ENCODE measurements at regions of chr4 and their contacts with region 1.

Region 1: DNA sequence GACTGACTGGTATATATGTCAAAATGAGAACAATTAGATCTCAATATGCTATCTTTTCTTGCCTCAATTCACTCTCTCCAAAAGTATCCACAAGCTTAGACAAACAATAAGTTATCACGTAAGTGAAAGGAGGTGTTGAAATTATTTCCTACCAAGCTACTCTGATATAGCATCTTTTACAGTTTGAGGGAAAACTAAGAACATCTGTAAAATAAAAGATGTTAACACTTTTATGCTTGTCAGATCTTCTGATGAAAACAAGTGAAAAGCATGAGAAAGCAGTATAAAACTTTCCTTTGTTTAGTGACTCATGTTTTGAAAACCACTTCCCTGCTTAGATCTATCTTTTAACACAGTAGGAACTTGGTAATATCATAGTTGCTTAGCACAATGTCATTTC is 8.4 kb upstream of the MAB21L2 start:
- DNase-seq: no peak
- H3K4me3 Mint-ChIP-seq: no peak overlapping the region
- H3K27ac Mint-ChIP-seq: no peak overlapping the region
- H3K4me1 Mint-ChIP-seq: peaks cover 6% of the 10 kb centered on the region
- H3K27me3 Mint-ChIP-seq: no peaks in the 10 kb centered on the region

Region 2: DNA sequence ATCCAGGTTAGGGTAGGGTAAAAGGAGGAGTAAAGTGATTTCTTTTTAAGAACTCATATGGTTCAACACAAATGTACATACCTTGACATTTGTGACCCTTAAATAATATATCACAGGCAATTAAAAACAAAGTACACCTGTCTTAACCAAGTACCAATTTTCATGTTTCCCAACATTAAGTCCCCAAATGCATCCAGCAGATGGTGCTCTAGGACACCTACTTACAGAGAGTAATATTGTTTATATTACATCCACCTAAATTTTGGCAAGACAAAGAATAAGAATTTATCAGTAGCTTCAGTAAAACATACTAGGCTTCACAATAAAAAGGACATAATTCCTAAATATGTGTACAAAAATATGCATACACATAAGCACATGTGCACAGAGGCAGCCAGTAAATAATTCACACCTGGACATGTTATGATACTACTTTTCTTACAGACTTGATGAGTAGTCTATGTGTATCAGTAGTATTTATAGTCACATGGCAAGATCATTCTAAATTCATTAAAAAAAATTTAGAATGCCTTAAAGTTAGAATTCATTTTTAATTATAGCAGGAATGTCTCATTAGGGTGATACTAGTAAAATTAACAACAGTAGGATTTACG is 275.6 kb before region 1 on chr4:
- CTCF ChIA-PET with region 1: interaction called, 3 read pairs
- POLR2A ChIA-PET with region 1: no interaction called
- intact Hi-C with region 1: loop called (anchors 5 kb)
- DNase-seq: peak; percentile 34
- H3K4me3 Mint-ChIP-seq: no peak overlapping the region
- H3K27ac Mint-ChIP-seq: no peak overlapping the region
- H3K4me1 Mint-ChIP-seq: peaks cover 7% of the 10 kb centered on the region
- H3K27me3 Mint-ChIP-seq: no peaks in the 10 kb centered on the region

Region 3: GRCh38 chr4:150518559-150518958 is 55.0 kb before region 1 on chr4:
- CTCF ChIA-PET with region 1: no interaction called
- POLR2A ChIA-PET with region 1: no interaction called
- intact Hi-C with region 1: loop called (anchors 5 kb)
- DNase-seq: no peak
- H3K4me3 Mint-ChIP-seq: no peak overlapping the region
- H3K27ac Mint-ChIP-seq: no peak overlapping the region
- H3K4me1 Mint-ChIP-seq: peaks cover 17% of the 10 kb centered on the region
- H3K27me3 Mint-ChIP-seq: no peaks in the 10 kb centered on the region

Region 4: DNA sequence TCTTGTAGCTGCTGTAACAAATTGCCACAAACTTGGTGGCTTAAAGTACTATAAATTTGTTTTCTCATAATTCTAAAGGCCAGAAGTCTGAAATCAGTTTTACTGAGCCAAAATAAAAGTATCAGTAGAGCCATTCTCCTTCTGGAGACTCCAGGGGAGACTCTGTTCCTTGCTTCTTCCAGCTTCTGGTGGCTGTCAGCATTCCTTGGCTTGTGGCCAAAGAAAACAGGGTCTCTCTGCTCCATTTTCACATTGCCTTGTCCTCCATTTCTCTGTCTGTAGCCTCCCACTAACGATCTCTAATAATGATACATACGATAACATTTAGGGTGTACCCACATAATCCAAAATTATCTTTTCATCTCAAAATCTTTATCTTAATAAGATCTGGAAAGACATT is 208.8 kb after region 1 on chr4:
- CTCF ChIA-PET with region 1: no interaction called
- POLR2A ChIA-PET with region 1: no interaction called
- intact Hi-C with region 1: no loop called
- DNase-seq: no peak
- H3K4me3 Mint-ChIP-seq: no peak overlapping the region
- H3K27ac Mint-ChIP-seq: no peak overlapping the region
- H3K4me1 Mint-ChIP-seq: no peaks in the 10 kb centered on the region
- H3K27me3 Mint-ChIP-seq: no peaks in the 10 kb centered on the region